ENCODE measurements at regions of chr1 and their contacts with region 1.

Region 1: DNA sequence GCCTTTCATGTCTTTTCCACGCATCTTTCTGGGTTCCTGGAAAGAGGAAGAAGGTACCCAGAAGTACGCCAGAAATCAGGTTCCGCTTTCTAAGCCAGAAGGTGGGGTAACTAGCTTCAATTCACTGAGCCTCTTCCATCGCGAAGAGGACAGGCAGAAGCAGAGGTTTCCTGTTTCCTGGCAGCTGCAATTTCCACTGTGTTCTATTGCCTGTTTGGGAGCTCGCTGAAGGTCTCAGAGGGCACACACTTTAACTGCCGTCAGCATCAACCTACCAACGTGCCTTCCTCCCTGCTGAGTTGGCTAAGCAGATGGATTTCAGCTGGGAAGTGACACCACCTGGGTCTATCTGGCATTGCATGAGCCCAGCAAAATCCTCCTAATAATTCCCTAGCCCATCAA is 10.0 kb downstream of the NCF2 start:
- DNase-seq: no peak
- ATAC-seq: peak; percentile 59
- H3K4me3 Mint-ChIP-seq: no peak overlapping the region
- H3K27ac Mint-ChIP-seq: peak overlapping the region; percentile 67
- H3K4me1 Mint-ChIP-seq: peaks cover 26% of the 10 kb centered on the region
- H3K27me3 Mint-ChIP-seq: no peaks in the 10 kb centered on the region

Region 2: GRCh38 chr1:183520379-183520778 is 59.9 kb before region 1 on chr1:
- CTCF ChIA-PET with region 1: no interaction called
- DNase-seq: no peak
- ATAC-seq: no peak
- H3K4me3 Mint-ChIP-seq: no peak overlapping the region
- H3K27ac Mint-ChIP-seq: no peak overlapping the region
- H3K4me1 Mint-ChIP-seq: peaks cover 6% of the 10 kb centered on the region
- H3K27me3 Mint-ChIP-seq: no peaks in the 10 kb centered on the region

Region 3: GRCh38 chr1:183590244-183591191 is 10.2 kb after region 1 on chr1 and contains the start of gene NCF2:
- CTCF ChIA-PET with region 1: interaction called, 10 read pairs
- DNase-seq: peak; percentile 84
- ATAC-seq: peak; percentile 98
- H3K4me3 Mint-ChIP-seq: peak within 1 kb of the TSS; percentile 55
- H3K27ac Mint-ChIP-seq: peak within 1 kb of the TSS; percentile 87
- H3K4me1 Mint-ChIP-seq: peaks cover 39% of the 10 kb centered on the region
- H3K27me3 Mint-ChIP-seq: peaks cover 2% of the 10 kb centered on the region
- total RNA-seq, gene NCF2: 6.0 to 9.8 TPM

Region 4: GRCh38 chr1:183622884-183623785 is 42.9 kb after region 1 on chr1:
- CTCF ChIA-PET with region 1: no interaction called
- DNase-seq: peak; percentile 64
- ATAC-seq: peak; percentile 85
- H3K4me3 Mint-ChIP-seq: no peak overlapping the region
- H3K27ac Mint-ChIP-seq: no peak overlapping the region
- H3K4me1 Mint-ChIP-seq: peaks cover 4% of the 10 kb centered on the region
- H3K27me3 Mint-ChIP-seq: no peaks in the 10 kb centered on the region

Measured in activated CD8-positive, alpha-beta memory T cell treated with anti-CD3 and anti-CD28 coated beads, Interleukin-2, amount 10 ng/mL, durations not matched to agents 7 days and 5 days (primary cell).